Adrenal gland (tissue), 19 donors: ENCODE measurements at regions of chr16 and their contacts with region 1.

Region 1: GRCh38 chr16:86519649-86520316 is 9.5 kb downstream of the FOXF1 start:
- DNase-seq: peak in 5 of 7 donors; percentile 59 to 73 (median 62)
- H3K4me3 ChIP-seq: peak overlapping the region in 1 of 4 donors; percentile 3
- H3K27ac ChIP-seq: no peak overlapping the region
- H3K4me1 ChIP-seq: peaks cover 0 to 8% of the 10 kb centered on the region in 2 donors
- H3K27me3 ChIP-seq: peaks cover 67% of the 10 kb centered on the region
- CTCF ChIP-seq: peak; percentile 75 to 93 (median 79)
- POLR2A ChIP-seq: no peak

Region 2: DNA sequence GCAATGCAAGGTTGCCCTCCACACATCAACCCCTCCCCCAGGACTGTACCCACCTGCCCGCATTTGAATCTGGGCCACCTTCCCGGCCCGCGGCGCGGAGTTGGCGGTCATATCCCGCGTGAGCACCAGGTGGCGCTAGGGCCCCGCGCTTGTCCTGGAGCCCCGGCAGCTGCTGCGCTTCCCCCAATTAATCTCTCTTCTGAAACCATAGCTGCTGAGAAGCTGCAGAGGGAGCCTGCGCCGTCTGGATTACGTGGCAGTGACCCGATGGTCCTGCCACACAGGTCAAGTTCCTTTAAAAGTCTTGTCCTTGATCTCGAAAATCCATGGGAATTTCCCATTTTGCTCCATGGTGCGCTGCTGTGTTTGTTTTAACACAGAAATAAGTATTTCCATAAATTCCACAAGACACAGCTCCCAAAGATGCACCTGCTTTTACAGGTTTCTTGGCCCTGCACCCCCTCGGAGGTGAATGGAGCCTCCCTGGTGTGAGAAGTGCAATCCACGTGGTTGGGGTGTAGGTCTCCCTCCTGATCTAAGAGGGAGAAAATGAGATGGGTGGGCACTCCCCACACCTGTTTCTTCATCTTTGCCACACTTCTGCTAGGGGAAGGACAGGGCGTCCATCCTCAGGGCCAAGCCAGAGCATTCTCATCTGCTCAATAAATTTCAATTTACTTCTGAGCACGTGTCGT is 698.2 kb before region 1 on chr16:
- intact Hi-C with region 1: loop called in 1 of 2 experiments (anchors 10 kb)
- DNase-seq: peak; percentile 74 to 90 (median 82)
- H3K4me3 ChIP-seq: no peak overlapping the region
- H3K27ac ChIP-seq: no peak overlapping the region
- H3K4me1 ChIP-seq: no peaks in the 10 kb centered on the region
- H3K27me3 ChIP-seq: no peaks in the 10 kb centered on the region
- CTCF ChIP-seq: peak; percentile 89 to 99 (median 96)
- POLR2A ChIP-seq: no peak

Region 3: DNA sequence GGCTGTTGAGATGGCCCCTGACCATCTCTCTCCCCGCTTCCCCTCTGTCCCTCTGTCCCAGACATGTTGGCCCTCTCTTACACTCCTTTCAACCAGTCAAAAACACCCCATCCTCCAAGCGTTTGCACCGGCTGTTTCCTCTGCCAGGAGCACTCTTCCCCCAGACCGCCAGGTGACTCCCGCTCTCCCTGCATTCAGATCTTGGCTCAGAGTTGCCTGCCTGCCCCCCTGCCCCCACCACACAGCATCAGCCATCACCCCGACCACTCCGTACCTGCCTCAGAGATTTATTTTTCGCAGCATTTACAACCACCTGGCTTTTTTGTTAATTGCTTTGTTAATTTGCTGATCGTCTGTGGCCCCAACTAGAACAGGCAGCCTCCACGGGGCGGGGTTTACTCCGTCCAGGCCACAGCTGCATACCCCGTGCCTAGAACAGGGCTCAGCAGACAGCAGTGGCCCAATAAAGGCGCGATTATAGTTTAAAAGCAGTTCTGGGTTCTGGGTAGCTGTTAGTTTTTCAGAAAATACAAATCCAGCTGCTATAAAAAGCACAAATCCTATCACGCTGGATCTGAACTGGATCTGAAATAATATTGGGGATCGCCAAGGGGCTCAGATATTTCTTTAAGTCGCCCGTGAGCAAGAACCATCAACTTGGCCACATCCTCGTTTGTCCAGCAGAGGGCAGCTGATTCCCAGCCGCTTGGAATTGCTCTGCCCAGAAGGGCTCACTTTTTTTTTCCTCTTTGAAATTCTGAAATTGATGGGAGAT is 447.3 kb before region 1 on chr16:
- intact Hi-C with region 1: loop called (anchors 2 to 5 kb)
- DNase-seq: peak; percentile 30 to 81 (median 64)
- H3K4me3 ChIP-seq: no peak overlapping the region
- H3K27ac ChIP-seq: no peak overlapping the region
- H3K4me1 ChIP-seq: no peaks in the 10 kb centered on the region
- H3K27me3 ChIP-seq: peaks cover 17% of the 10 kb centered on the region
- CTCF ChIP-seq: peak; percentile 58 to 78 (median 64)
- POLR2A ChIP-seq: no peak

Region 4: DNA sequence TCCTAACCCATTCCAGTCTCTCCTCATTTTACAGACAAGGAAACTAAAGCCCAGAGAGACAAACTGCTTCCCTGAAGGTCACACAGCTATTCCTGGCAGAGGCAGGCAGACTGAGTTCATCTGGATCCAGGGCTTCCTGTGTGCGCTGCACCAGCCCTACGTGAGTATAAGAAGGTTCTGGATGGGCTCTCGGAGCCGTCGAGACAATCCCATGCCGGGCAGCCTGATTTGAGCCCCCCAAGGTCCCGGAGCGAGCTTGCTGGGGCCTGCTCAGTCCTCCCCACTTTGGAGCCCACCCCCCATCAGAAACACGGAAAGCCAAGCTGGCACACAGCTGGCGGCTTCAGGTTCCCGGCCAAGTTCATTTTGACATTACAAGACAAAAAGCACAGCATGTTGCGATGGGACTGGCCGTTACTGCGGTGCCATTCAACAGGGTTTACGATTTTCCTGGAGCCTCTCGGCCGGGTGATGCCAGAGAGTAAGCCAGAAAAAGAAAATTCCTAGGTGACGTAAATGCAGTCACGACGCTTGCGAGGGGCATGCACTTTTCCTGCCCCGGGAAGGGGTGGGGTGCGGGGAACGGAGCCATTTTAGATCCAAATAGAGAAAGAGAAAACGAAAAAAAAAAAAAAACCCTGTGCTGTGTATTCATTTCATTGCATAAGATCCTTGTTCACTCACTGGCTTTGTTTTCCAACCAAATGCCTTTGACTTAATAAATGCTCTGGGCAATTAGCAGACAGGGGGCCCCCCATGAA is 176.6 kb before region 1 on chr16:
- intact Hi-C with region 1: loop called (anchors 5 to 10 kb)
- DNase-seq: peak in 5 of 7 donors; percentile 27 to 61 (median 29)
- H3K4me3 ChIP-seq: no peak overlapping the region
- H3K27ac ChIP-seq: peak overlapping the region in 1 of 5 donors; percentile 72
- H3K4me1 ChIP-seq: peaks cover 0 to 3% of the 10 kb centered on the region in 2 donors
- H3K27me3 ChIP-seq: peaks cover 5% of the 10 kb centered on the region
- CTCF ChIP-seq: no peak
- POLR2A ChIP-seq: no peak

Region 5: GRCh38 chr16:86476956-86477530 is 42.7 kb before region 1 on chr16:
- intact Hi-C with region 1: no loop called
- DNase-seq: no peak
- H3K4me3 ChIP-seq: no peak overlapping the region
- H3K27ac ChIP-seq: peak overlapping the region in 1 of 5 donors; percentile 7
- H3K4me1 ChIP-seq: no peaks in the 10 kb centered on the region
- H3K27me3 ChIP-seq: peaks cover 4% of the 10 kb centered on the region
- CTCF ChIP-seq: no peak
- POLR2A ChIP-seq: no peak